ENCODE measurements at regions of chr5 and their contacts with region 1.

Region 1: GRCh38 chr5:132639706-132640130 is 18.3 kb upstream of the IL13 start:
- DNase-seq: no peak
- H3K4me3 Mint-ChIP-seq: no peak overlapping the region
- H3K27ac Mint-ChIP-seq: no peak overlapping the region
- H3K4me1 Mint-ChIP-seq: peaks cover 43% of the 10 kb centered on the region
- H3K27me3 Mint-ChIP-seq: no peaks in the 10 kb centered on the region

Region 2: GRCh38 chr5:132094393-132095076 is 545.2 kb before region 1 on chr5:
- CTCF ChIA-PET with region 1: no interaction called
- intact Hi-C with region 1: loop called (anchors 5 kb)
- DNase-seq: peak; percentile 37
- H3K4me3 Mint-ChIP-seq: no peak overlapping the region
- H3K27ac Mint-ChIP-seq: no peak overlapping the region
- H3K4me1 Mint-ChIP-seq: peaks cover 33% of the 10 kb centered on the region
- H3K27me3 Mint-ChIP-seq: peaks cover 4% of the 10 kb centered on the region

Region 3: GRCh38 chr5:132688536-132689339 is 49.0 kb after region 1 on chr5:
- CTCF ChIA-PET with region 1: no interaction called
- intact Hi-C with region 1: loop called (anchors 1 kb)
- DNase-seq: peak; percentile 69
- H3K4me3 Mint-ChIP-seq: no peak overlapping the region
- H3K27ac Mint-ChIP-seq: peak overlapping the region; percentile 17
- H3K4me1 Mint-ChIP-seq: peaks cover 27% of the 10 kb centered on the region
- H3K27me3 Mint-ChIP-seq: no peaks in the 10 kb centered on the region